HepG2 (cell line): ENCODE measurements at regions of chr1 and their contacts with region 1.

Region 1: DNA sequence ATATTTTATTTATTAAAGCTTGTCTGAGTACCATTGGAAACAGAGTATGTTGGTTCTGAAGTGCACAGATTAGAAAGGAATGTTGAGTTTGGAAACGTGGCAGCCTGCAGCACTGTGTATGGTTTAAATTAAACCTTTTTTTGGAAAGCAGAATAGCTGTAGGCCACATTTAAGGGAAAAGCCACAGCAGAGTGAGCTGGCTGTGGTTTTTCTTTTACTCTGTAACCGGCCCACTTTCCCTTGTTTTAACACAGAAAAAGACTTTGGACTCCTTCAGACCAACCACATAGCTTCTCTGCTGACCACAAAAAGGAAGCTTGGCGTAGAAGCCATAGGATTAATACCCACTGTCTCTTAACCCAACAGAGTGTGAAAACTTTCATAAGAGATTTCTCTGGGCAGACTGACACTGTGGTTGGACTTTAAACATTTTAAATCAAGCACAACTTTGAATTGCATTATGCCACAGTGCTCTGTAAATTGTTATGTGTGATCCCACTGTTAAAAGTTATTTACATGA is 75.2 kb downstream of the NFIA start:
- DNase-seq: peak; percentile 85
- ATAC-seq: peak; percentile 93
- H3K4me3 ChIP-seq: peak overlapping the region in 1 of 3 experiments; percentile 31; a peak in 2 of 6 replicates
- H3K27ac ChIP-seq: peak overlapping the region; percentile 65
- H3K4me1 ChIP-seq: peaks cover 58% of the 10 kb centered on the region
- H3K27me3 ChIP-seq: no peaks in the 10 kb centered on the region
- CTCF ChIP-seq: no peak
- EP300 ChIP-seq: 0 out of 4 replicates have a peak, but pooled peaks of 1 of the 2 experiments have one; percentile 39
- POLR2A ChIP-seq: no peak
- RAD21 ChIP-seq: no peak

Region 2: GRCh38 chr1:61184040-61184713 is 26.6 kb after region 1 on chr1:
- CTCF ChIA-PET with region 1: no interaction called
- POLR2A ChIA-PET with region 1: interaction called, 13 read pairs
- in situ Hi-C with region 1: no loop called
- intact Hi-C with region 1: loop called (anchors 2 kb)
- DNase-seq: peak; percentile 74
- ATAC-seq: peak; percentile 75
- H3K4me3 ChIP-seq: peak overlapping the region; percentile 31 to 65 (median 51)
- H3K27ac ChIP-seq: peak overlapping the region; percentile 98
- H3K4me1 ChIP-seq: peaks cover 61% of the 10 kb centered on the region
- H3K27me3 ChIP-seq: no peaks in the 10 kb centered on the region
- CTCF ChIP-seq: no peak
- EP300 ChIP-seq: no peak
- POLR2A ChIP-seq: peak in 1 of 2 experiments; percentile 17; a peak in 1 of 4 replicates
- RAD21 ChIP-seq: no peak